ENCODE measurements at regions of chr3 and their contacts with region 1.

Region 1: GRCh38 chr3:170357176-170357919 is at the start of gene SKIL:
- DNase-seq: peak; percentile 92
- ATAC-seq: peak; percentile 53
- H3K4me3 Mint-ChIP-seq: peak within 1 kb of the TSS; percentile 89
- H3K27ac Mint-ChIP-seq: peak within 1 kb of the TSS; percentile 97
- H3K4me1 Mint-ChIP-seq: peaks cover 80% of the 10 kb centered on the region
- H3K27me3 Mint-ChIP-seq: no peaks in the 10 kb centered on the region
- CTCF ChIP-seq: no peak
- total RNA-seq, gene SKIL: 112 and 123 TPM in 2 replicates

Region 2: GRCh38 chr3:169812332-169813235 is 544.8 kb before region 1 on chr3 and contains the starts of genes LRRC34 and LRRIQ4:
- CTCF ChIA-PET with region 1: no interaction called
- POLR2A ChIA-PET with region 1: interaction called, 7 read pairs
- intact Hi-C with region 1: loop called (anchors 2 kb)
- DNase-seq: peak; percentile 70
- ATAC-seq: peak; percentile 56
- H3K4me3 Mint-ChIP-seq: peak within 1 kb of the TSS; percentile 85
- H3K27ac Mint-ChIP-seq: peak within 1 kb of the TSS; percentile 97
- H3K4me1 Mint-ChIP-seq: peaks cover 37% of the 10 kb centered on the region
- H3K27me3 Mint-ChIP-seq: no peaks in the 10 kb centered on the region
- CTCF ChIP-seq: no peak
- total RNA-seq, gene LRRC34: 4.2 and 5.7 TPM in 2 replicates
- total RNA-seq, gene LRRIQ4: 0.29 and 0.40 TPM in 2 replicates

Region 3: DNA sequence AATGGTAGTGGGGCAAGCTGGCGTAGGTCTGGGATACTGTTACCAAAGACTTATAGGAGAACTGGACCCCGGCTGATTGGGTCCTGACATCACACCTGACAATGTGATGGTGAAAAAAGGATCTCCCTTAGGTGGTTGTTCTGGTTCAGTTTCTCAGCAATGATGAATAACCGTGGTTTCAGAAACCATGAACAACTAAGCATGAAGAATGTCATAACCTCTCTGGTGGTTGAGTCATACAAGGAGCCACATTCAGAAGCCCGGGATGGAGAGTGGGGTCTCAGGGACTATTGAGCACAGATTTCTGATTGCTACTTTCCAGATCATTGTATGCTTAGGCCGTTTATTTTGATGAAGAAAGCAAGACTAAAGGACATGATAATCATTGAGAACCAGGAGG is 302.1 kb before region 1 on chr3:
- CTCF ChIA-PET with region 1: no interaction called
- POLR2A ChIA-PET with region 1: interaction called, 12 read pairs
- intact Hi-C with region 1: loop called (anchors 2 kb)
- DNase-seq: no peak
- ATAC-seq: peak; percentile 75
- H3K4me3 Mint-ChIP-seq: peak overlapping the region; percentile 77
- H3K27ac Mint-ChIP-seq: peak overlapping the region; percentile 87
- H3K4me1 Mint-ChIP-seq: peaks cover 57% of the 10 kb centered on the region
- H3K27me3 Mint-ChIP-seq: no peaks in the 10 kb centered on the region
- CTCF ChIP-seq: no peak

Region 4: DNA sequence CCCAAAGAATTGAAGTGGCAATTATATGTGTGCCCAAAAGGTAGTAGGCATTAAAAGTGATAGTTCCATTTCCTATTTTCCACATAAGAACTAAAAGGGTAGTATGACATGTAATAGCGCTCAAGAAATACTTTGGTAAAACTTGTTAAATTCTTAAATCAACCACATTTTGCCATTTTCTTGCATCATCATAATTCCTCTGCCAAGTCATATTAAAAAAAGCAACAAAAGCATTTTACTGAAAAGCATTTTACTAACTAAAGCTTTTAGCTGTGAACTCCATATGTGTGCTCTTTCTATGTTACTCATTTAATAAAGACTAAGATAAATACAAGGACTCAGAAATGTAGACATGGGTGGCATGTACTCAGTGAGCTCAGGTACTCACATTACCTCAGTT is 249.4 kb before region 1 on chr3:
- CTCF ChIA-PET with region 1: no interaction called
- POLR2A ChIA-PET with region 1: no interaction called
- intact Hi-C with region 1: no loop called
- DNase-seq: no peak
- ATAC-seq: no peak
- H3K4me3 Mint-ChIP-seq: no peak overlapping the region
- H3K27ac Mint-ChIP-seq: no peak overlapping the region
- H3K4me1 Mint-ChIP-seq: peaks cover 2% of the 10 kb centered on the region
- H3K27me3 Mint-ChIP-seq: no peaks in the 10 kb centered on the region
- CTCF ChIP-seq: no peak

Region 5: GRCh38 chr3:170307671-170308403 is 49.5 kb before region 1 on chr3:
- CTCF ChIA-PET with region 1: interaction called, 5 read pairs
- POLR2A ChIA-PET with region 1: interaction called, 27 read pairs
- intact Hi-C with region 1: loop called (anchors 1 kb)
- DNase-seq: no peak
- ATAC-seq: no peak
- H3K4me3 Mint-ChIP-seq: no peak overlapping the region
- H3K27ac Mint-ChIP-seq: no peak overlapping the region
- H3K4me1 Mint-ChIP-seq: peaks cover 10% of the 10 kb centered on the region
- H3K27me3 Mint-ChIP-seq: no peaks in the 10 kb centered on the region
- CTCF ChIP-seq: no peak

Region 6: GRCh38 chr3:170368921-170369320 is 11.6 kb after region 1 on chr3:
- CTCF ChIA-PET with region 1: interaction called, 4 read pairs
- POLR2A ChIA-PET with region 1: interaction called, 45 read pairs
- intact Hi-C with region 1: loop called (anchors 1 kb)
- DNase-seq: no peak
- ATAC-seq: no peak
- H3K4me3 Mint-ChIP-seq: no peak overlapping the region
- H3K27ac Mint-ChIP-seq: peak overlapping the region; percentile 46
- H3K4me1 Mint-ChIP-seq: peaks cover 70% of the 10 kb centered on the region
- H3K27me3 Mint-ChIP-seq: no peaks in the 10 kb centered on the region
- CTCF ChIP-seq: no peak

Region 7: GRCh38 chr3:170869645-170870593 is 512.6 kb after region 1 on chr3 and contains the start of gene RPL22L1:
- CTCF ChIA-PET with region 1: no interaction called
- POLR2A ChIA-PET with region 1: interaction called, 22 read pairs
- intact Hi-C with region 1: loop called (anchors 1 kb)
- DNase-seq: peak; percentile 89
- ATAC-seq: peak; percentile 86
- H3K4me3 Mint-ChIP-seq: peak within 1 kb of the TSS; percentile 95
- H3K27ac Mint-ChIP-seq: peak within 1 kb of the TSS; percentile 97
- H3K4me1 Mint-ChIP-seq: peaks cover 34% of the 10 kb centered on the region
- H3K27me3 Mint-ChIP-seq: no peaks in the 10 kb centered on the region
- CTCF ChIP-seq: no peak
- total RNA-seq, gene RPL22L1: 109 and 124 TPM in 2 replicates